OCI-LY7 (cell line): ENCODE measurements at regions of chr15 and their contacts with region 1.

Region 1: GRCh38 chr15:69976366-69976994 is 121.2 kb downstream of the TLE3 start:
- DNase-seq: peak; percentile 81
- H3K4me3 ChIP-seq: no peak overlapping the region
- H3K27ac ChIP-seq: no peak overlapping the region
- H3K4me1 ChIP-seq: peaks cover 30% of the 10 kb centered on the region
- CTCF ChIP-seq: no peak

Region 2: GRCh38 chr15:69755551-69756310 is 220.7 kb before region 1 on chr15:
- CTCF ChIA-PET with region 1: no interaction called
- POLR2A ChIA-PET with region 1: no interaction called
- intact Hi-C with region 1: loop called (anchors 2 kb)
- DNase-seq: peak; percentile 62
- H3K4me3 ChIP-seq: peak overlapping the region; percentile 14
- H3K27ac ChIP-seq: peak overlapping the region; percentile 40
- H3K4me1 ChIP-seq: peaks cover 54% of the 10 kb centered on the region
- CTCF ChIP-seq: no peak

Region 3: GRCh38 chr15:69881766-69882165 is 94.7 kb before region 1 on chr15:
- CTCF ChIA-PET with region 1: no interaction called
- POLR2A ChIA-PET with region 1: no interaction called
- intact Hi-C with region 1: loop called (anchors 1 kb)
- DNase-seq: peak; percentile 99
- H3K4me3 ChIP-seq: peak overlapping the region; percentile 62
- H3K27ac ChIP-seq: peak overlapping the region; percentile 91
- H3K4me1 ChIP-seq: peaks cover 59% of the 10 kb centered on the region
- CTCF ChIP-seq: no peak; the same call in 1 of the 2 replicates

Region 4: DNA sequence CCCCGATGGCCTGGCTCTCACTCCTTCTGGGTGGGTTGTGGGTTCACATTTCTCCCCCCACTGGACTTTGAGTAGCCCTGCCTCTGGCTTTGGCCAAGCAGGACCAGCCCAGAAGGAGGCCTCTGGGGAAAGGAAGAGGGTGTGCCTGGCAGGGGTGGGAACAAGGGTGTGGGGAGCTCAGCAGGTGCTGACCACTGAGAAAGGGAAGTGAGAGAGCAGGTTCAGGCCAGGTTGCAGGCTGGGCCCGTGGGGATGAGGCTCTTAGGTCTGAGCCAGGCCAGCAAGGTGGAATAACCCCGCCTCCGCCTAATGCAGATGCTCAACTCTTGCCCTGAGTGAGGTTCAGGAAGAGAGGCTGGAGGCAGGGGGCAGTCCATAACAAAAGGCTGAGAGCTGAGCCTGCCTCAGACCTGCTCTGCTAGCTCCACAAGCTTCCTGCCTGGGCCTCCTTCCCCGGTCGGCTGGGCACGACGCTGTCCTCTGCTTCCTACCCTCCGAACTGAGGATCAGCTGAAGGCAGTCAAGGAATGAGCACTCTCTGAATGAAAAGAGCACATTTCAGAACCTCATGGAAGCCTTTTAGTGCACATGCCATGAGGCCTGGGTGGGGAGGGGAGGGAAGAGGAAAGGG is 38.5 kb after region 1 on chr15:
- CTCF ChIA-PET with region 1: interaction called, 3 read pairs
- POLR2A ChIA-PET with region 1: interaction called, 4 read pairs
- intact Hi-C with region 1: loop called (anchors 1 kb)
- DNase-seq: peak; percentile 93
- H3K4me3 ChIP-seq: peak overlapping the region; percentile 28
- H3K27ac ChIP-seq: peak overlapping the region; percentile 81
- H3K4me1 ChIP-seq: peaks cover 83% of the 10 kb centered on the region
- CTCF ChIP-seq: no peak; the same call in 1 of the 2 replicates

Region 5: GRCh38 chr15:70036585-70037291 is 60.3 kb after region 1 on chr15:
- CTCF ChIA-PET with region 1: no interaction called
- POLR2A ChIA-PET with region 1: interaction called, 5 read pairs
- intact Hi-C with region 1: loop called (anchors 2 kb)
- DNase-seq: peak; percentile 76
- H3K4me3 ChIP-seq: peak overlapping the region; percentile 14
- H3K27ac ChIP-seq: peak overlapping the region; percentile 15
- H3K4me1 ChIP-seq: peaks cover 50% of the 10 kb centered on the region
- CTCF ChIP-seq: no peak